GM12878 (cell line): ENCODE measurements at regions of chr1 and their contacts with region 1.

Region 1: DNA sequence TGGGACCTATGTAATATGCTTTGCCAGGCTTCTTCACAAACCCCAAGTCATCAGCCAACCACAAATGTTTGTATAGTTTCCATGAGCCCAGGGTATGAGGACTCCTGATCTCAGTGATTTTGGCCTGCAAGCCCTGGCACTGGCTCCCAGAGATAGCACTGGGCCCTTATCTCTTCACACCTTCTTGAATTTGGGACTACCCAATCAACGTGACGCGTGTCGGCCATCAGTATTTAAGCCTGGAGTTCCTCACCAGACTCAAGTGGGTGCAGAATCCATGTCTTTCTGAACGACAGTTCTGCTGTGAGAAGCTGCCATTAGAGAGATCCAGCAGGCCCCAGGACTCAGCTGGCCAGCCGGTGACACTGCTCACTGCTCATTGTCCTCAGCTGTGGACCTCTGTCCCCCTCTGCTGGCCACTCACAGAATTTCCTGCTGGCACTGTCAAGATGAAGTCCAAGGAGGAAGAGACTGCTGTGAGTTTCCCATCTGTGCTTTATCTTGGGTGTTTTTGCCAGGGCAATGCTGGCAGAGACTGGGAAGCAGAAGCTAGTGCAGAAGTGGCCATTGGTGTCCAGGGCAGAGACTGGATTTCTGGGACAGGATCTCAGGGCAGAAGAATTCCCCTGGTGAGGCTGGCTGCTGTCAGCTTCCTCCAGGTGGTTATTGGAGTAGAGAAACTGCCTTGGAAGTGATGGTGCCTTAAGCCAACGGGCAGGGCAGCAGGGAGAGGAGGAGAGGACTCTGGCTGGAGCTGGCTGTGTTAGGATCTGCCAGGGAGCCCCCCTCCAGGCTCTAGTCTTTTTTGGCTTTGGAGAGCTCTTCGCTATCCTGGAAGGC is 28.4 kb downstream of the TMCC2 start:
- DNase-seq: no peak
- ATAC-seq: peak; percentile 98
- H3K4me3 ChIP-seq: no peak overlapping the region
- H3K27ac ChIP-seq: no peak overlapping the region
- H3K4me1 ChIP-seq: no peaks in the 10 kb centered on the region
- H3K27me3 ChIP-seq: peaks cover under 1 to 2% of the 10 kb centered on the region in 2 experiments; a peak in 2 of 4 replicates
- CTCF ChIP-seq: peak; percentile 91 to 96 (median 93); a peak in 5 of 6 replicates
- EP300 ChIP-seq: no peak
- POLR2A ChIP-seq: no peak
- RAD21 ChIP-seq: peak; percentile 99

Region 2: DNA sequence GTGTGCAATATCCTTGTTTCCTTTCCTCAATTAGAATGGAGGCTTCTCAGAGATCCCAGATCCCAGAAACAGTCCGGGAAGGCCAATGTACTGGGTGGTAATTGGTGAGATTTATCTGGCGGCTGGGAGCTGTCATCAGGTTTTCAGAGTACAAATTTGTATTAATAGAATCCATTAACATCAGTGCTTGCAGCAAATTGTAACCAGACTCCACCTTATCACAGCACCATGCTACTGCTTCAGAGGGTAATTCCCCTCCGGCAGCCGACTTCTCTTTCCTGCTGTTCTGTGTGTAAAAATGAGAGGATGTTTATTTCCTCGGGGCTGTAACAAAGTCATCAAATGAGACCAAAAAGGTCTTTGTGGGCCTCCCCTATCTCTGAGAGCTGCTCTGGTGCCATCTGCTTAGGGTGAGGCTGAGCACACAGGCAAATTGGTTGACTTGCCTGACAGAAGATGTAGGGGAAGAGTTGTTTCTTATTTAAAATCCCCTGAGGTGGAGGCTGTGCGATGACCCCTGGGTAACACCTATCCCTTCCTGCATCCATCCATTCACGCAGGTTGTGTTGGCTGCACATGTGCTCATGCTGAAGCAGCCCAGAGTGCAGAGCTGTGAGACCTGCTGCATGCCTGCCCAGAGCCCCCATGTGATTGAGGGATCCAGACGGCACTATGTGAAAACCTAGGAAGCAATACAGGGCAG is 366.3 kb before region 1 on chr1:
- CTCF ChIA-PET with region 1: no interaction called
- POLR2A ChIA-PET with region 1: no interaction called
- RAD21 ChIA-PET with region 1: no interaction called
- SMC1A ChIA-PET with region 1: no interaction called
- in situ Hi-C with region 1: no loop called
- intact Hi-C with region 1: no loop called
- DNase-seq: no peak
- ATAC-seq: no peak
- H3K4me3 ChIP-seq: no peak overlapping the region
- H3K27ac ChIP-seq: no peak overlapping the region
- H3K4me1 ChIP-seq: no peaks in the 10 kb centered on the region
- H3K27me3 ChIP-seq: peaks cover 6 to 10% of the 10 kb centered on the region in 2 experiments
- CTCF ChIP-seq: no peak
- EP300 ChIP-seq: no peak
- POLR2A ChIP-seq: no peak
- RAD21 ChIP-seq: no peak

Region 3: GRCh38 chr1:204989266-204990058 is 266.7 kb before region 1 on chr1:
- CTCF ChIA-PET with region 1: interaction called, 33 read pairs
- POLR2A ChIA-PET with region 1: interaction called, 3 read pairs
- RAD21 ChIA-PET with region 1: interaction called, 17 read pairs
- SMC1A ChIA-PET with region 1: interaction called, 8 read pairs
- in situ Hi-C with region 1: no loop called
- intact Hi-C with region 1: loop called (anchors 1 kb)
- DNase-seq: no peak
- ATAC-seq: peak; percentile 90
- H3K4me3 ChIP-seq: no peak overlapping the region
- H3K27ac ChIP-seq: no peak overlapping the region
- H3K4me1 ChIP-seq: no peaks in the 10 kb centered on the region; the same call in 1 of the 2 replicates
- H3K27me3 ChIP-seq: peaks cover 2 to 4% of the 10 kb centered on the region in 2 experiments; a peak in 1 of 4 replicates
- CTCF ChIP-seq: peak; percentile 94 to 97 (median 95); a peak in 5 of 6 replicates
- EP300 ChIP-seq: no peak
- POLR2A ChIP-seq: no peak
- RAD21 ChIP-seq: peak; percentile 95

Region 4: GRCh38 chr1:205141236-205142101 is 114.7 kb before region 1 on chr1:
- CTCF ChIA-PET with region 1: interaction called, 45 read pairs
- POLR2A ChIA-PET with region 1: no interaction called
- RAD21 ChIA-PET with region 1: interaction called, 4 read pairs
- SMC1A ChIA-PET with region 1: interaction called, 23 read pairs
- in situ Hi-C with region 1: no loop called
- intact Hi-C with region 1: loop called (anchors 5 kb)
- DNase-seq: peak; percentile 30
- ATAC-seq: peak; percentile 97
- H3K4me3 ChIP-seq: no peak overlapping the region
- H3K27ac ChIP-seq: no peak overlapping the region
- H3K4me1 ChIP-seq: peaks cover 4% of the 10 kb centered on the region; the same call in 1 of the 2 replicates
- H3K27me3 ChIP-seq: no peaks in the 10 kb centered on the region
- CTCF ChIP-seq: peak; percentile 70 to 79 (median 72)
- EP300 ChIP-seq: no peak
- POLR2A ChIP-seq: no peak
- RAD21 ChIP-seq: peak; percentile 59

Region 5: GRCh38 chr1:205211169-205211838 is 44.9 kb before region 1 on chr1 and contains the start of gene DSTYK:
- CTCF ChIA-PET with region 1: interaction called, 4 read pairs
- POLR2A ChIA-PET with region 1: no interaction called
- RAD21 ChIA-PET with region 1: no interaction called
- SMC1A ChIA-PET with region 1: interaction called, 11 read pairs
- in situ Hi-C with region 1: no loop called
- intact Hi-C with region 1: no loop called
- DNase-seq: peak; percentile 70
- ATAC-seq: peak; percentile 89
- H3K4me3 ChIP-seq: peak within 1 kb of the TSS; percentile 88
- H3K27ac ChIP-seq: peak within 1 kb of the TSS; percentile 42
- H3K4me1 ChIP-seq: peaks cover 8% of the 10 kb centered on the region; the same call in 1 of the 2 replicates
- H3K27me3 ChIP-seq: no peaks in the 10 kb centered on the region
- CTCF ChIP-seq: 0 out of 6 replicates have a peak, but pooled peaks of 1 of the 3 experiments have one; percentile 1
- EP300 ChIP-seq: peak in 1 of 2 experiments; percentile 48; a peak in 2 of 4 replicates
- POLR2A ChIP-seq: peak; percentile 91
- RAD21 ChIP-seq: no peak
- polyA plus RNA-seq, gene DSTYK: 2.7 to 3.4 TPM

Region 6: GRCh38 chr1:205267306-205267902 is 11.2 kb after region 1 on chr1:
- CTCF ChIA-PET with region 1: interaction called, 21 read pairs
- POLR2A ChIA-PET with region 1: interaction called, 3 read pairs
- RAD21 ChIA-PET with region 1: interaction called, 20 read pairs
- SMC1A ChIA-PET with region 1: interaction called, 10 read pairs
- in situ Hi-C with region 1: no loop called
- intact Hi-C with region 1: no loop called
- DNase-seq: no peak
- ATAC-seq: peak; percentile 46
- H3K4me3 ChIP-seq: no peak overlapping the region
- H3K27ac ChIP-seq: no peak overlapping the region
- H3K4me1 ChIP-seq: no peaks in the 10 kb centered on the region
- H3K27me3 ChIP-seq: no peaks in the 10 kb centered on the region; a peak in 1 of 4 replicates
- CTCF ChIP-seq: no peak
- EP300 ChIP-seq: no peak
- POLR2A ChIP-seq: no peak
- RAD21 ChIP-seq: no peak

Region 7: DNA sequence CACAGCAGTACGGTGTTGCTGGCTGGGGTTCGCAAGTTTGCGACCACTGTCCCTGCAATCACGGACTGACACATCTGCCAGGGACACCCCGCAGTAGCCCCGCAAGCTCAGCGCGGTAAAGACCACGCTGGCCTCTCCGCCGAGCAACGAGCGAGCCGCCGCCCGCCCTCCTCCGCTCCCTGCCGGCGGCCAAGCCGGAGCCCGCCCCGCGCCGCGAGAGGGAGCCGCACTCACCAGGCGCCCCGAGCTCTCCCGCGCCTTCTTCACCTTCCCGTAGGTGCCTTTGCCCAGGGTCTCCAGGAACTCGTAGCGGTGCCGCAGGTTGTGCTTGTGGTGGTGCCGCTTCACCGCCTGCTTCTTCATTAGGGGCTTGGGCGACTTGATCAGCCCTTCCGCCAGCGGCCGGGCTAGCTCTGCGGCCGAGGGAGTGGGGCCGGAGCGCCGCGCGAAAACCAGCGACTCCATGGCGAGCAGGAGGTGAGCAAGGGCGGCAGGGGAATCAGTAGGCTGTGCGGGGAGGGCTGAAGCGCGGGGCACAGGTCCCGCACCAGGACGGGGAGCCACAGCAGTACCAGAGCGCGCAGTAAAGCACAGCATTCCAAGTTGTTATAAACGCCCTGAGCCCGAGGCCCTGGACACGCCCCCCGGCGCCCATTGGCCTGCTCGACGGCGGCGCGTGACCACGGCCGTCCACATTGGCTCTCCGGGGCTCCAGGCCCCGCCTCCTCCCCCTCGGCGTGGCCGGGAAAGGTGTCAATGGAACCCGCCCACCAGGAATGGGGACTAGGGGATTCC is 65.2 kb after region 1 on chr1 and contains the start of gene NUAK2:
- CTCF ChIA-PET with region 1: interaction called, 2,333 read pairs
- POLR2A ChIA-PET with region 1: no interaction called
- RAD21 ChIA-PET with region 1: interaction called, 19 read pairs
- SMC1A ChIA-PET with region 1: interaction called, 21 read pairs
- in situ Hi-C with region 1: no loop called
- intact Hi-C with region 1: no loop called
- DNase-seq: no peak
- ATAC-seq: peak; percentile 85
- H3K4me3 ChIP-seq: peak within 1 kb of the TSS; percentile 36; the same call in 1 of the 2 replicates
- H3K27ac ChIP-seq: no peak within 1 kb of the TSS
- H3K4me1 ChIP-seq: peaks cover 13% of the 10 kb centered on the region
- H3K27me3 ChIP-seq: peaks cover 0 to 8% of the 10 kb centered on the region in 2 experiments; a peak in 3 of 4 replicates
- CTCF ChIP-seq: peak in 1 of 3 experiments; percentile 21; a peak in 1 of 6 replicates
- EP300 ChIP-seq: no peak
- POLR2A ChIP-seq: peak; percentile 44; the same call in 1 of the 2 replicates
- RAD21 ChIP-seq: peak; percentile 9; the same call in 1 of the 2 replicates
- polyA plus RNA-seq, gene NUAK2: 0.27 to 0.31 TPM

Region 8: DNA sequence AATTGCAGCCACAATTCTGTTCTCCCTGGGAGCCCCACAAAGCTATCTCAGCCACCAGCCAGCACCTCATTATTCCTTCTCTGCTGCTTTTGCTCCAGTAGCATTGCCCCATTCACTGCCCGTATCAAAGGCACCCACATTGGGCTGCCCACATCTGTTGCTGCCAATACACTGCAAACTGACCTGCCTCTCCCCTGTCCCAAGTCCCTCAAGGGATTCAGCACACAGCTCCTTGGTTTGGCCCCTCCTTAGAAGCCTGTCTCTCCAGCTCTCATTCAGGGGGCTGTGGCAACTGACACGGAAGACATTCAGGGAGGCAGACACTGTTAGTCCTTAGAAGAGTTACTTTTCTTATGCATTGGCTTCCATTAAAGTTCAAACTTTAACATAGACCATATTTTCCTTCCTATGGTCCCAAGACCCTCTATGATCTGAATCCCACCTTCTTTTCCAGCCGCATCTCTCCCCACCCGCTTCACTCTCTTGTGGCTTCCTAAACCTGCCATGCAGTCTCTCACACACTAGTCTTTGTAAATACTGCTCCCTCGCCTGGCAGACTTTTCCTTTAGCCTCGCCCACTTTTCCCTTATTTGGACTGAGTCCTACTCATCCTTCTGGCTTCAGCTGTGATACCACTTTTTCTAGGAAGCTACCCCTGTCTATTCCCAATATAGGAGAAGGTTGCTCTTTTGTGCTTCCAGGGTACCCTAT is 119.8 kb after region 1 on chr1:
- CTCF ChIA-PET with region 1: no interaction called
- POLR2A ChIA-PET with region 1: no interaction called
- RAD21 ChIA-PET with region 1: no interaction called
- SMC1A ChIA-PET with region 1: no interaction called
- in situ Hi-C with region 1: no loop called
- intact Hi-C with region 1: no loop called
- DNase-seq: no peak
- ATAC-seq: no peak
- H3K4me3 ChIP-seq: no peak overlapping the region
- H3K27ac ChIP-seq: no peak overlapping the region
- H3K4me1 ChIP-seq: no peaks in the 10 kb centered on the region
- H3K27me3 ChIP-seq: peaks cover 3 to 5% of the 10 kb centered on the region in 2 experiments; a peak in 3 of 4 replicates
- CTCF ChIP-seq: no peak
- EP300 ChIP-seq: no peak
- POLR2A ChIP-seq: no peak
- RAD21 ChIP-seq: no peak